Calu3 (cell line): ENCODE measurements at regions of chr2 and their contacts with region 1.

Region 1: GRCh38 chr2:85302121-85302520 is 25.7 kb downstream of the TGOLN2 start:
- DNase-seq: no peak
- H3K4me3 Mint-ChIP-seq: no peak overlapping the region
- H3K27ac Mint-ChIP-seq: no peak overlapping the region
- H3K4me1 Mint-ChIP-seq: peaks cover 6% of the 10 kb centered on the region
- H3K27me3 Mint-ChIP-seq: peaks cover 13% of the 10 kb centered on the region
- CTCF ChIP-seq: no peak

Region 2: DNA sequence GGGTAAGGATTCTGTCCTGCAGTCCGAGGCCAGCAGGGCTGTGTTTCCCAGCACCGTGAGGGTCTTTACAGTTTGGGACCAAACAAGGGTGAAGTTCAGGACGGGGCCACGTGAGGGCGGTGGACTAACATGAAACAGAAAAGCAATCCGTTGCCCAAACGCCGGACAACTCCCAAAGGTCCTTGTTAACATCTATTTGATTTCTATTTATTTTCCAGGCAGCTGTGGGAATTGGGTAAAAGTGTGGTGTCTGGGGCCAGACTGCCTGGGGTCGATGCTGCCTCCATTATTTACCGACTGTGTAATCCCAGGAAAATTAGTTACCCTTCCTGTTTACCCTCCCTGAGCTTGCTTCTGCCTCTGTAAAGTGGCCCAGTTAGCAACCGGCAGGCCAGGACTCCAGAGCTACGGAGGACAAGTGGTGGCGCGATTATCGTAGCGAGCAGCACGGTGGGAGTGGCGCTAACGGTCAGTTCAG is 235.2 kb before region 1 on chr2:
- CTCF ChIA-PET with region 1: interaction called, 35 read pairs
- intact Hi-C with region 1: loop called (anchors 1 kb)
- DNase-seq: peak; percentile 79
- H3K4me3 Mint-ChIP-seq: peak overlapping the region; percentile 18
- H3K27ac Mint-ChIP-seq: no peak overlapping the region
- H3K4me1 Mint-ChIP-seq: no peaks in the 10 kb centered on the region
- H3K27me3 Mint-ChIP-seq: no peaks in the 10 kb centered on the region
- CTCF ChIP-seq: peak; percentile 88

Region 3: GRCh38 chr2:85132834-85133637 is 169.1 kb before region 1 on chr2 and contains the start of gene TCF7L1:
- CTCF ChIA-PET with region 1: interaction called, 5 read pairs
- intact Hi-C with region 1: loop called (anchors 5 kb)
- DNase-seq: peak; percentile 86
- H3K4me3 Mint-ChIP-seq: peak within 1 kb of the TSS; percentile 81
- H3K27ac Mint-ChIP-seq: no peak within 1 kb of the TSS
- H3K4me1 Mint-ChIP-seq: no peaks in the 10 kb centered on the region
- H3K27me3 Mint-ChIP-seq: no peaks in the 10 kb centered on the region
- CTCF ChIP-seq: peak; percentile 89
- total RNA-seq, gene TCF7L1: 2.9 and 3.0 TPM in 2 replicates